ENCODE measurements at regions of chr1 and their contacts with region 1.

Region 1: DNA sequence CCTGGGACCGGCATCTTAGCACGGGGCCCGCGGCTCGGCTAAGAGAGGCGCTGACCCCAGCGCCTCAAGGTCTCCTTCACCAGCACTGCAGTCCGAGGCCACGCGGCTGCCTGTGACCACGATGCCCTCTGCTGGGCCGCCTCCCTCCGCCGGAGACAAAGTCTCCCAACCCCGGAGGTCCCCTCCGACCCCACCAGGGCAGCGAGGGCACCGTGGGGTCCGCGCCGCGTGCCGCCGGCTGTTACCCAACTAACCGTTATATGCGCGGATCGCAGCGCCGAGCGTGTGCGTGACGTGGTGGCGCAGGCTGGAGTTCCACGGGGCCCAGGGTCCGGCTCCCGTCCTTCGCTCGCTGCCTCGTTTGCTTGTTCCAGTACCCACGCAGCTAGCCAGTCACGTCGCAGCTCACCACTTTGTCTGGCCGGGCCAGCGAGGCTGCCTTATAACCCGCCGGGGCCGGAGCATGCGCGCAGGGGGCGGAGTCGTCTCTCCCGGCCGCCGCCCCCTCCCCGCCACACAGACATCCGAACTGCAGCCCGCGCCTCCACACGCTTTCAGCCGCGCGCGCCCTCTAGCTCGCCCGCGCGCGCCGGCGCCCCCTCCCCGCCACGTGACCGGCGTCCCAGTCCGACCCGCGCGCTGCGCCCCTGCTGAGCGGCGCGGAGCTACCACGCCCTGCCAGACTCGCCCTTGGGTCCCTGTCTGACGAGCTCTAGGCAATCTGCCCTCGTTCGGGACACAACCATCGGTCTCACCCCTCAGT is at the start of gene SLC16A1:
- DNase-seq: peak; percentile 80 to 95
- H3K4me3 ChIP-seq: peak within 1 kb of the TSS; percentile 71 to 88
- H3K27ac ChIP-seq: peak within 1 kb of the TSS; percentile 88 to 94
- H3K4me1 ChIP-seq: peaks cover 0 to 23% of the 10 kb centered on the region in 2 donors
- H3K27me3 ChIP-seq: no peaks in the 10 kb centered on the region
- CTCF ChIP-seq: peak in 2 of 3 experiments; percentile 33 to 42
- total RNA-seq, gene SLC16A1: 31.8 TPM

Region 2: GRCh38 chr1:111990878-111991718 is 964.9 kb before region 1 on chr1:
- intact Hi-C with region 1: loop called (anchors 10 kb)
- DNase-seq: peak in 1 of 2 donors; percentile 85
- H3K4me3 ChIP-seq: peak overlapping the region; percentile 75 to 94
- H3K27ac ChIP-seq: peak overlapping the region; percentile 58 to 78
- H3K4me1 ChIP-seq: peaks cover 3 to 18% of the 10 kb centered on the region in 2 donors
- H3K27me3 ChIP-seq: no peaks in the 10 kb centered on the region
- CTCF ChIP-seq: peak; percentile 7 to 48 (median 32)

Region 3: DNA sequence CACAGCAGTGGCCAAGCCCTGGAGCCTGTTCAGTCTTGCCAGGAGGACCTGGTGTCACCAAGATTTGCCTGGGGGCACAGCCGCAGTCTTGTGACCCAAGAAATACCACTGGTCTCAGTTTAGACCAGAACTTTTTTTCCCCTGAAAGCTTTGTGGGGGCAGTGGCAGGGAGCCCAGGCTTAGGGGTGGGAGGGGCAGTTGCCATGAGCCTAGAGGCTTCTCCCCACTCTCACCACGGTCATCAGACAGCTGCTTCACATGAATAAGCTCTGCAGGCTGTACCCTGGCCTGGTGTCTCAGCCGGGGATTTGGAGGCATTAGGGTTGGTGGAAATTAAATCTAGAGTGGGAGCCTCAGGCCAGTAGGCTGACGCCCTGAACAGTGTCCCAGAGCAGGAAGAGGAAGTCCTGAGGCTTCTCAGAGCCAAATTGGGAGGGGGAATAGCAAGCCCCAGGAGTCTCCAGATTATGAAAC is 73.7 kb before region 1 on chr1:
- intact Hi-C with region 1: loop called (anchors 1 kb)
- DNase-seq: no peak
- H3K4me3 ChIP-seq: no peak overlapping the region
- H3K27ac ChIP-seq: no peak overlapping the region
- H3K4me1 ChIP-seq: no peaks in the 10 kb centered on the region
- H3K27me3 ChIP-seq: no peaks in the 10 kb centered on the region
- CTCF ChIP-seq: no peak

Region 4: GRCh38 chr1:112982853-112983536 is 27.0 kb after region 1 on chr1:
- intact Hi-C with region 1: no loop called
- DNase-seq: no peak
- H3K4me3 ChIP-seq: no peak overlapping the region
- H3K27ac ChIP-seq: no peak overlapping the region
- H3K4me1 ChIP-seq: peaks cover 0 to 3% of the 10 kb centered on the region in 2 donors
- H3K27me3 ChIP-seq: no peaks in the 10 kb centered on the region
- CTCF ChIP-seq: no peak

Region 5: GRCh38 chr1:113042285-113043143 is 86.6 kb after region 1 on chr1:
- intact Hi-C with region 1: loop called (anchors 2 kb)
- DNase-seq: peak; percentile 37 to 85
- H3K4me3 ChIP-seq: no peak overlapping the region
- H3K27ac ChIP-seq: no peak overlapping the region
- H3K4me1 ChIP-seq: peaks cover 0 to 5% of the 10 kb centered on the region in 2 donors
- H3K27me3 ChIP-seq: no peaks in the 10 kb centered on the region
- CTCF ChIP-seq: peak; percentile 61 to 83 (median 66)

Region 6: DNA sequence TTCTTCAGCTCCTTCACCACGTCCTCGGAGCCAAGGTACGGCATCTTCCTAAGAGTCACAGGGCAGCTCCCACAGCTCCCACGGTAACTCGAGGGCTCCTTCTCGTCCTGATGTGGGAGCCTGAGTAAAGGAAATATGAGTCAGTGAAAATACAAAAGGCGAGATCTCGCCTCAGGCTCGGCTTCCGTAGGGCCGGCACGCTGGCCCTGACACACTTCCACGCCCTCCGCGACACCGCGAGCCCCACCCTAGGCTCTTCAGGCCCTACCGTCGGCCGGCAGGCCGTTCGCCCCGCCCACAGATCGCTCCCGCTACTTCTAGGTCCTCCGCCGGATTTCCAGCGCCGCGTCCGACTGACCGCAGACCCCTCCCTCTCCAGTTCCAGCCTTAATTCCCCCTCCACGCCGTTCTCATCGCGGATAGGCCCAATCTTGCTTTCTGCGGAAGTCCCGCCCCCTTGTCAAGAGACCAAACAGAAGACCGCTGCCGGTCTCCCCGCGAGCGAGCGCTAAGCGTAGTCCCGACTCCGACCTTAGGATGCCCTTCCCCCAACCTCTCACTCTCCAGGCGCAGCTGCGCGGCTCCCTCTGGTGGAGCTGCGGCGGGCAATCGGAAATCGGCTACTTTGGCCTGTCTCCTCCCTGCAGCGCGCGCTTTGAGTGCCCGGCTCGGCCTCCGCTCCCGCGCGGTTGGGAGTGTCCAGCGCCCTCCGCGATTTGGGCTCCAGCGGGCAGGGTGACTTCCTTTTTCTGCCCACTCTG is 948.9 kb after region 1 on chr1 and contains the starts of genes AP4B1 and DCLRE1B:
- intact Hi-C with region 1: loop called (anchors 10 kb)
- DNase-seq: peak; percentile 97 to 99
- H3K4me3 ChIP-seq: peak within 1 kb of the TSS; percentile 85 to 86
- H3K27ac ChIP-seq: peak within 1 kb of the TSS; percentile 86 to 92
- H3K4me1 ChIP-seq: peaks cover 0 to 17% of the 10 kb centered on the region in 2 donors
- H3K27me3 ChIP-seq: no peaks in the 10 kb centered on the region
- CTCF ChIP-seq: peak; percentile 53 to 82 (median 69)
- total RNA-seq, gene AP4B1: 3.2 TPM
- total RNA-seq, gene DCLRE1B: 1.9 TPM